SK-N-SH (cell line): ENCODE measurements at regions of chr14 and their contacts with region 1.

Region 1: GRCh38 chr14:54902521-54903420 is at the start of gene GCH1:
- DNase-seq: peak; percentile 96
- H3K4me3 ChIP-seq: peak within 1 kb of the TSS; percentile 80 to 82
- H3K27ac ChIP-seq: peak within 1 kb of the TSS; percentile 11 to 83; a peak in 3 of 4 replicates
- H3K4me1 ChIP-seq: peaks cover 4 to 5% of the 10 kb centered on the region in 2 experiments; a peak in 1 of 4 replicates
- H3K27me3 ChIP-seq: no peaks in the 10 kb centered on the region
- CTCF ChIP-seq: peak; percentile 66
- EP300 ChIP-seq: no peak
- RAD21 ChIP-seq: peak; percentile 41
- polyA plus RNA-seq, gene GCH1: 2.2 and 4.7 TPM in 2 replicates

Region 2: GRCh38 chr14:54922598-54922997 is 19.8 kb after region 1 on chr14:
- CTCF ChIA-PET with region 1: interaction called, 54 read pairs
- POLR2A ChIA-PET with region 1: interaction called, 7 read pairs
- DNase-seq: peak; percentile 85
- H3K4me3 ChIP-seq: no peak overlapping the region
- H3K27ac ChIP-seq: peak overlapping the region in 1 of 2 experiments; percentile 90; a peak in 2 of 4 replicates
- H3K4me1 ChIP-seq: peaks cover 0 to 4% of the 10 kb centered on the region in 2 experiments; a peak in 1 of 4 replicates
- H3K27me3 ChIP-seq: no peaks in the 10 kb centered on the region
- CTCF ChIP-seq: no peak
- EP300 ChIP-seq: peak in 1 of 2 experiments; percentile 95; a peak in 2 of 4 replicates
- RAD21 ChIP-seq: peak; percentile 35; the same call in 1 of the 2 replicates

Region 3: DNA sequence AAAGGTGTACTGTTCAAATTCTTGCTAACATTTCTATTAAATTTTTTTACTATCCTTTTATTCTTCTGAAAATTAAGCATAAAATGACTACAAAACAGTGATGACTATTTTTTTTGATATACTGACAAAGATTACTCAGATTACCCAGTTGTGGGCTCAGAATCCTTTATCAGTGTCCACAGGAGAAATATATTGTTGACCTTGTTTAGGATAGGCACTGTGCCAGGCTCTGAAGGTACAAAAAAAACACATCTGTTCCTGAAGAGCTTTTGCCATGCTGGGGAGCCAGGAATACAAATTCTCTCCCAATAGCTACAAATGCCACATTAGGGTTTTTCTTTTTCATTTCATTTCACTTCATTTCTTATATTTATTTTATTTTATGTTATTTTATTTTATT is 26.8 kb after region 1 on chr14:
- CTCF ChIA-PET with region 1: interaction called, 54 read pairs
- POLR2A ChIA-PET with region 1: interaction called, 3 read pairs
- DNase-seq: no peak
- H3K4me3 ChIP-seq: no peak overlapping the region
- H3K27ac ChIP-seq: peak overlapping the region in 1 of 2 experiments; percentile 53; a peak in 2 of 4 replicates
- H3K4me1 ChIP-seq: peaks cover 0 to 11% of the 10 kb centered on the region in 2 experiments; a peak in 2 of 4 replicates
- H3K27me3 ChIP-seq: no peaks in the 10 kb centered on the region
- CTCF ChIP-seq: no peak
- EP300 ChIP-seq: peak in 1 of 2 experiments; percentile 27; a peak in 1 of 4 replicates
- RAD21 ChIP-seq: no peak